Activated CD4-positive, alpha-beta T cell treated with anti-CD3 and anti-CD28 coated beads for 36 hours (primary cell): ENCODE measurements at regions of chr22 and their contacts with region 1.

Region 1: DNA sequence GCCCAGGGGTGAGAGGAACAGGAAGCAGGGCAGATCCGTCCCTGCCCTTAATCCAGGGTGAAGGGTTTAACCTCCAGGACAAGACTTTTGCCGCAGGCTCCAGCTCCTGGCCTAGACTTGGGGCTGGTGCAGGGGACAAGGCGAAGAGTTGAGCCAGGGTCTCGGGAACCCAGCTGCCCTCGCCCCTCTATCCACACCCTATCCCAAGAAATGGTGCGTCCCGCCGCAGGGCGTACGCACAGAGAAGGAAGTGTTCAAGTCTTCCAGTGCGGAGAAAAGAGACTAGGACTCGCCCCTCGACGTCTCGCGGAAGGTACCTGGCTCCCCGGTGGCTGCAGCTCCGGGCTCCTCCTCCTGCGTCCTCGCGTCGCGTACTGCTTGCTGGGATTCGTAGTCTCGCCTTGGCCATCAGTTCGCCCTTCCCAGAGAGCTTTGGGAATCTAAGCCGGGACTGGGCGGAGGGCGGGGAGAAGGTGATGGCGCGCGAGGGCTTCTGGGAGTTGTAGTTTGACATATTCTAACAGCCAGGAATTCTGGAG is at the start of gene ZMAT5:
- DNase-seq: peak; percentile 96
- ATAC-seq: peak; percentile 97
- H3K4me3 Mint-ChIP-seq: peak within 1 kb of the TSS; percentile 99
- H3K27ac Mint-ChIP-seq: peak within 1 kb of the TSS; percentile 98
- H3K4me1 Mint-ChIP-seq: peaks cover 31% of the 10 kb centered on the region
- H3K27me3 Mint-ChIP-seq: no peaks in the 10 kb centered on the region
- total RNA-seq, gene ZMAT5: 19.2 to 25.1 TPM

Region 2: GRCh38 chr22:29267858-29268417 is 498.8 kb before region 1 on chr22 and contains the starts of genes EWSR1 and RHBDD3:
- CTCF ChIA-PET with region 1: no interaction called
- POLR2A ChIA-PET with region 1: no interaction called
- intact Hi-C with region 1: loop called in 1 of 2 experiments (anchors 1 kb)
- DNase-seq: peak; percentile 96
- ATAC-seq: peak; percentile 85
- H3K4me3 Mint-ChIP-seq: peak within 1 kb of the TSS; percentile 91
- H3K27ac Mint-ChIP-seq: peak within 1 kb of the TSS; percentile 97
- H3K4me1 Mint-ChIP-seq: peaks cover 37% of the 10 kb centered on the region
- H3K27me3 Mint-ChIP-seq: no peaks in the 10 kb centered on the region
- total RNA-seq, gene EWSR1: 326 to 567 TPM
- total RNA-seq, gene RHBDD3: 23.2 to 25.3 TPM

Region 3: GRCh38 chr22:29581807-29582206 is 184.9 kb before region 1 on chr22:
- CTCF ChIA-PET with region 1: no interaction called
- POLR2A ChIA-PET with region 1: no interaction called
- intact Hi-C with region 1: loop called in 1 of 2 experiments (anchors 1 kb)
- DNase-seq: no peak
- ATAC-seq: no peak
- H3K4me3 Mint-ChIP-seq: peak overlapping the region; percentile 89
- H3K27ac Mint-ChIP-seq: peak overlapping the region; percentile 93
- H3K4me1 Mint-ChIP-seq: peaks cover 8% of the 10 kb centered on the region
- H3K27me3 Mint-ChIP-seq: no peaks in the 10 kb centered on the region

Region 4: DNA sequence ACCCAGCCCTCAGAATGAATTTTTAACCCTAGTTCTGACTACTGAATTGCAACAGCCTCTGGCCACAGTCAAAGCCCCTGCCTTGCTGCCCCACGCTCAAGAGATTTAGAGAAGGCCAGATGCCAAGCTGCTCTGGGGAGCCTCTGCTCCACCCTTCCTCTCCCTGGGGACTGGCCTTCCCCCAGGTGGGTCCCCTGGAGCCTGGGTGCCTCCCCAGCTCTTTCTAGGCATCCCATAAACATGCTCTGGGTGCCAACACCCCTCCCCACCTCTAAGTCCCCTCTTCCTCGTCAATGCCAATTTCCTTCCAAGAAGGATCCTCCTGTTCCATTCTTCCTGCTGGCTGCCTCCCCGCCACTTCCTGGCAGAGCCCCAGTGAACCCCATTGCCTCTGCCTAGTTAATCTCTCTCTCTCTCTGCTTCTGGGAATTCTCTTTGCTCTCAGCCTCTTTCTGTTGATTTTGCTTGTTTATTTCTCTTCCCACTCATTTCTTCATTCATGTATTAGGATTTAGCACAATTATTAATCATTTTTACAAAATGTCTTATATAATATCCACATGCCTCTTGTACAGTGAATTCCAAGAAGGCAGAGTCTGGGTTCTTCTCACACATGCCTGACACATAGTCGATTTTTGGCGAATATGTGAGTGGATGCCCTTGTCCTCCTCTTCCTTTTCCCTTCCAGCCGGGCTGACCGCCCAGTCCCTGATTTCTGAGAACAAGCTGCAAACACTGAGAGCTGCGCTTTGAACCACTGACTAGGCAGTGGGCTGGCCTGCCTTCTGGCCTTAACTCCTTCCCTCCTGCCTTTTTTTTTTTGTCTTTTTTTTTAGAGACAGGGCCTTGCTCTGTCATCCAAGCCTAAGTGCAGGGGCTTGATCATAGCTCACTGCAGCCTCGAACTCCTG is 18.0 kb after region 1 on chr22:
- CTCF ChIA-PET with region 1: no interaction called
- POLR2A ChIA-PET with region 1: no interaction called
- intact Hi-C with region 1: no loop called
- DNase-seq: no peak
- ATAC-seq: no peak
- H3K4me3 Mint-ChIP-seq: no peak overlapping the region
- H3K27ac Mint-ChIP-seq: no peak overlapping the region
- H3K4me1 Mint-ChIP-seq: no peaks in the 10 kb centered on the region
- H3K27me3 Mint-ChIP-seq: no peaks in the 10 kb centered on the region

Region 5: DNA sequence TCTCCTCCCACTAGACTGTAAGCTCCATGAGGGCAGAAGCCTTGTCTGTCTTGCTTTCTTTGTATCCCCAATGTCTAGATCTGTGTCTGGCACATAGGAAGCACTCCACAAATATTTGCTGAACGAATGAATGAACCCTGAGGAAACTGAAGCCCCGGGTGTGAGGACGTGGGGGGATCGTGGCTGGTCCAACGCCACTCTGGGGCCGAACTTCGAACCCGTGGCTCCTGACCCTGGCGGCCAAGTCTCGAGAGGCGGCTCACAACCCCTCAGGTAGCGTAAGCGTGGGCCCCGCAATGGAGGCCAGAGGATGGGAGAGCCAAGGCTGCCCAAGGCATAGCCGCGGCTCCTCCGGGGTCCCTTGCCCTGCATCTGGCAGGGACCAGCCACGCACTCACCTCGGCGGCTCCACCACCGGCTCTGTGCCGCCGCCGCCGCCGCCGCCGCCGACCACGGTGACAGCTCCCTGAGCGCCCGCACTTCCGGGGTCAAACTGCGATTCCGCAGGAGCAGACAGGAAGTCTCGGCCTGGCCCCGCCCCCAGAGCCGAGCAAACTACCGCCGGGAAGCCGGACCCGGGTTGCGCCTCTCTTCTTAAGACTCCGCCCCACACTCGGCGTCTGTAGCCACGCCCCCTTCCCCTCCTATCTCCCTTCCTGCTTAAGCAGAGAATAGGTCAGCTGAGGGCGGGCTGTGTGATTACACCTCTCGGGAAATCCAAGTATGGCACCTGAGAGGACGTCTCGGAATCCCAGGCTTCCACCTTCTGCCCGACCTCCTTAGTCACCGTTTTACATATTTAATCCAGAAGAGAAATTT is 71.3 kb after region 1 on chr22 and contains the start of gene ASCC2:
- CTCF ChIA-PET with region 1: no interaction called
- POLR2A ChIA-PET with region 1: no interaction called
- intact Hi-C with region 1: loop called (anchors 1 kb)
- DNase-seq: peak; percentile 100
- ATAC-seq: peak; percentile 99
- H3K4me3 Mint-ChIP-seq: peak within 1 kb of the TSS; percentile 99
- H3K27ac Mint-ChIP-seq: peak within 1 kb of the TSS; percentile 97
- H3K4me1 Mint-ChIP-seq: peaks cover 36% of the 10 kb centered on the region
- H3K27me3 Mint-ChIP-seq: no peaks in the 10 kb centered on the region
- total RNA-seq, gene ASCC2: 56.0 to 69.9 TPM

Region 6: GRCh38 chr22:30079952-30080533 is 313.3 kb after region 1 on chr22 and contains the start of gene HORMAD2:
- CTCF ChIA-PET with region 1: no interaction called
- POLR2A ChIA-PET with region 1: interaction called, 12 read pairs
- intact Hi-C with region 1: loop called in 1 of 2 experiments (anchors 10 kb)
- DNase-seq: peak; percentile 12
- ATAC-seq: no peak
- H3K4me3 Mint-ChIP-seq: no peak within 1 kb of the TSS
- H3K27ac Mint-ChIP-seq: no peak within 1 kb of the TSS
- H3K4me1 Mint-ChIP-seq: peaks cover 14% of the 10 kb centered on the region
- H3K27me3 Mint-ChIP-seq: peaks cover 3% of the 10 kb centered on the region
- total RNA-seq, gene HORMAD2: not detected

Region 7: GRCh38 chr22:30591588-30592359 is 825.1 kb after region 1 on chr22 and contains the start of gene PES1:
- CTCF ChIA-PET with region 1: no interaction called
- POLR2A ChIA-PET with region 1: no interaction called
- intact Hi-C with region 1: loop called in 1 of 2 experiments (anchors 10 kb)
- DNase-seq: peak; percentile 96
- ATAC-seq: peak; percentile 100
- H3K4me3 Mint-ChIP-seq: no peak within 1 kb of the TSS
- H3K27ac Mint-ChIP-seq: no peak within 1 kb of the TSS
- H3K4me1 Mint-ChIP-seq: no peaks in the 10 kb centered on the region
- H3K27me3 Mint-ChIP-seq: peaks cover 4% of the 10 kb centered on the region
- total RNA-seq, gene PES1: 134 to 137 TPM